ENCODE measurements at regions of chr6 and their contacts with region 1.

Region 1: GRCh38 chr6:125956506-125957390 is at the start of gene HINT3:
- DNase-seq: peak; percentile 99
- H3K4me3 ChIP-seq: peak within 1 kb of the TSS; percentile 79
- H3K27ac ChIP-seq: peak within 1 kb of the TSS; percentile 76
- H3K4me1 ChIP-seq: peaks cover 20% of the 10 kb centered on the region
- CTCF ChIP-seq: peak; percentile 92
- total RNA-seq, gene HINT3: 10.4 and 11.8 TPM in 2 replicates

Region 2: GRCh38 chr6:125301435-125302391 is 655.0 kb before region 1 on chr6 and contains the start of gene HDDC2:
- CTCF ChIA-PET with region 1: interaction called, 5 read pairs
- POLR2A ChIA-PET with region 1: no interaction called
- intact Hi-C with region 1: loop called (anchors 2 kb)
- DNase-seq: peak; percentile 71
- H3K4me3 ChIP-seq: peak within 1 kb of the TSS; percentile 83
- H3K27ac ChIP-seq: peak within 1 kb of the TSS; percentile 52
- H3K4me1 ChIP-seq: peaks cover 29% of the 10 kb centered on the region
- CTCF ChIP-seq: no peak
- total RNA-seq, gene HDDC2: 75.1 and 88.6 TPM in 2 replicates

Region 3: DNA sequence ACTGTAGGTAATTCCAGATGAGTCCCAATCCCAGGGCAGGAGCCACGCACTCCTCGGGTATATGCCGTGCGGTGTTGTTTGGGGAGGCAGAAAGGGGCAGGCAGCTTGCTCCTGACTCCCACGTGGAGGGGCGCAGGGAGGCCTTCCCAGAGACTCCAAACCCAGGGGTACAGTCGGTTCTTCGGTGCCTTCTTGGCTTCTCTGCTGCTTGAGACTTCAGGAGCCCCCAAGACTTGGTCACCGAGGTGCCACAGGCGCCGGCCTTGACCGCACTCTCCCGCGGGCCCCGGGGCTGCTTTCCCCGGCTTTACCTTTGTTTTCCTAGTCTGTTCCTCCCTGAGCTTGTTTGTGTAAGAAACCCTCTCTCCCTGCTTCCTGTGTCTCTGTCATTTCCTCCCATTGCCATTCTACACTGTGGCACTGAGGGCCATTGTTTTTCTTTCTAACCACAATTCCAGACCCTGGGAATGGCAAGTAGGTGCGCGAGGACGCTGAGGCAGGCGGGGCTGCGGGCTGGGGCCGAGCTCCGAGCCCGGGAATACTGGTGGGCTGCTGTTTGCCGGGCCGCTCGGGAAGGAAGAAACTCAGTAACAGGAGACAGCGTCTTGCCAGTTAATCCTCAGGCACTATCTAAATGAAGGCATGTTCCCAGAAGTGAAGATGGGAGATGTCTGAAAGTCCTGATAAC is 422.9 kb before region 1 on chr6:
- CTCF ChIA-PET with region 1: no interaction called
- POLR2A ChIA-PET with region 1: no interaction called
- intact Hi-C with region 1: no loop called
- DNase-seq: no peak
- H3K4me3 ChIP-seq: no peak overlapping the region
- H3K27ac ChIP-seq: no peak overlapping the region
- H3K4me1 ChIP-seq: no peaks in the 10 kb centered on the region
- CTCF ChIP-seq: no peak